ENCODE measurements at regions of chr15 and their contacts with region 1.

Region 1: DNA sequence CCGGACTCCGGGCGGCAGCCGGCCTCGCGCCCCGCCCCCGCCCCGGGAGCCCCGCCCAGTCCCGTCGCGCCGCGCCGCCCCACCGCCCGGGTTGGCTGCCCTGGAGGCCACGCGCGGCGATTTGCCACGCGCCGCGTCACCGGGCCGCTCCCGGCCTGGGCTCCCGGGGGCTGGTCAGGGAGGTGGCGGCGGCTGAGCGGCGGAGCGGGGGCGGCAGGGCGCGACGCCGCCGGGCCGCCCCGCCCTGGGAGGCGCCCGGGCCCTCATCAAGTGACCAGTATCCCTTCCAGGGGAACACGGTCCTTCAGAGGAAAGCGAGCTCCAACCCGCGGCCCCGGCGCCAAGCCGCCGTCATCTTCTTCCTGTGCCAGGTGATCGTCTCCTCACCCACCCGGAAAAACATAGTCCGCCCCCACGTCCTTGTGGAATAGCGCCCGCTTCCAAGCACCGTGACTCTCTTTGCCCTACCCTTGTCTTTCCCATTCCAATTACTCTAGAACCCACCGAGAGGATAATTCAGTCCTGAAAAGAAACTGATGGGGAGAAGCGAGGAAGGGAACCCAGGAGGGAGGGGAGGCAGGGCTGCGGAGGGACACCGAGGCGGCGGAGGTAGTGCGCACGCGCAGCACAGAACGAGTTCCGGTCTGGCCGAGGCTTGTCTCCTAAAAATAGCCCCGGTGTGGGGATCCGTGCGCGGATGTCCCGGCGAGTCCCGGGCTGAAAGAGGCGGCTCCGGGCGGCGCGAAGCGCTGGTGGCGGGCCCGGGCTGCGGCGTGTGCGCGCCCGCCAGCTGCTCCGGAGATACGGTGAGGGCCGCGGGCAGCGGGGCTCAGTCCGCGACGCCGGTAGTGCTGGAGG is at the start of gene MEF2A:
- H3K4me3 Mint-ChIP-seq: peak within 1 kb of the TSS; percentile 96
- H3K27ac Mint-ChIP-seq: peak within 1 kb of the TSS; percentile 97
- H3K4me1 Mint-ChIP-seq: peaks cover 51% of the 10 kb centered on the region
- H3K27me3 Mint-ChIP-seq: peaks cover 2% of the 10 kb centered on the region

Region 2: DNA sequence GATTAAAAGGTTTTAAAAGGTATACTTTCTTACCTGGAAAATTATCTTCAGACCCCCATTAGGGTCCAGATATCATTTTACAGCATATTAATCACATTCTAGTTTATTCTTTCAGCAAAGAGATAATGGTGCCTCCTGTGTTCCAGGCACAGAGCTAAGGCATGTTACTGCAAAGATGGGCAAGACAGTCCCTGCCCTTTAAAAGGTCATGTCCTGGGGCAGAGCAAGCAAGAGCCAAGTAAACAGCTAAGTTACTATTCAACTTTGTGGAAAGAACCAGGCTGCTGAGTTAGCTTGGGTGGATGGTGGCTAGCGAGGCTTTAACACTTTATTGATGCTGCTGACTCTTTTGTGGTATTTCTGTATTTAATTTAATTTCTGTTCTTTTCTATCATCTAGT is 239.3 kb before region 1 on chr15:
- intact Hi-C with region 1: no loop called
- H3K4me3 Mint-ChIP-seq: no peak overlapping the region
- H3K27ac Mint-ChIP-seq: no peak overlapping the region
- H3K4me1 Mint-ChIP-seq: no peaks in the 10 kb centered on the region
- H3K27me3 Mint-ChIP-seq: no peaks in the 10 kb centered on the region

Region 3: GRCh38 chr15:99452774-99453636 is 112.5 kb before region 1 on chr15:
- intact Hi-C with region 1: loop called (anchors 2 kb)
- H3K4me3 Mint-ChIP-seq: peak overlapping the region; percentile 62
- H3K27ac Mint-ChIP-seq: peak overlapping the region; percentile 98
- H3K4me1 Mint-ChIP-seq: peaks cover 71% of the 10 kb centered on the region
- H3K27me3 Mint-ChIP-seq: no peaks in the 10 kb centered on the region

Region 4: DNA sequence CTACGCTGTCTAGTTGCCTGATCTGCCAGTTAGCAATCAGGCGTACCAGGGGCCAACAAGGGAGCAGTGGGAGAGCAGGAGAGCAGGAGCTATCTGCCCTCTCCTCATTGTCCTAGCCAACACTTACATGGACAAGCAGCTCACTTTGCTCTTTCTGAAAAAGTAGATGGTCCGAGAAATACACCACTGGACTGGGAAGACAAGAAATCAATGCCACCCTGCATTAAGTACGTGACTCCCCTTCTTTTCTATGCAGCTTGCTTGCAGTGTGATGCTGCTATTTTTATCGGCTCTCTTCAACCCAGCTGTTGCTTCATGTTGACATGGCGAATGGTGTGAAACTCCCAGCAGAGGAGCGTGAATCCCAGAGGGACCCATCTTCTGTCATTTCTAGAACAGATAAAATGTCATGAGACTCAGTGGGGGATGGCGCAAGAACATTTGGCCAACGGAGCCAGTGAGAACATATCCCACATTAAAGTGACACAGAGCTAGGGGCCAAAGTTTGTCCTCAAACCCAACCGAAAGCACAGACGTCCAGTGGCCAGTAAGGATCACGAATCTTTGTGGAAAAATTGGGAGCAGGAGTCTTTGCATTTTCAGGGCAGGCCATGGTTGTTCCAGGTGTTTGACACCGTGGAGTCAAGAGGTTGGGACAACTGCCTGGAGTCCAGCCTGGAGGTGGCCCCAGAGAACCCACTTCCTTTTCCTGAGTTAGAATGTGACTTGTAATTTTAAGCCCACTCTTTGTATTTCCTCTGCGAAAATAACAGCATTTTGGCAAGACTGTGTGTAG is 53.5 kb before region 1 on chr15:
- intact Hi-C with region 1: loop called (anchors 5 kb)
- H3K4me3 Mint-ChIP-seq: no peak overlapping the region
- H3K27ac Mint-ChIP-seq: no peak overlapping the region
- H3K4me1 Mint-ChIP-seq: peaks cover 56% of the 10 kb centered on the region
- H3K27me3 Mint-ChIP-seq: peaks cover 2% of the 10 kb centered on the region

Region 5: DNA sequence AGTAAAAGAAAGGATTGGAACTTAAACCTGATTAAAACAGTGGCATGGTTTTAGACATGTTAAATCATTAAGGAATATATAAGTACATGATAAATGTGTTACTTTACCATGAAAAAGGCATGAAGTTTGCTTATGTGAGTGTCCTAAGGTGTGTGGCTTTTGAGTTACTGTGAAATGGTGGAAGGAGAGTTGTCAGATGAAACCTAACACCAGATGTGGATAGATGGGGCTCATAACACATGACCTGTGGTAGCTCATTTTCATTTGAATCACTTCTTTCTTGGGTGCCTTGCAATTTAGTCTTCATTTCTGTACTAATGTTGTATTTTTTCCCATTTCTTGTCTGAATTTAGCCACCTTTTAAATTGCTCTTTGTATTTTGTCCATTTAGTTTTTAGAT is 13.3 kb after region 1 on chr15:
- intact Hi-C with region 1: no loop called
- H3K4me3 Mint-ChIP-seq: no peak overlapping the region
- H3K27ac Mint-ChIP-seq: peak overlapping the region; percentile 39
- H3K4me1 Mint-ChIP-seq: peaks cover 58% of the 10 kb centered on the region
- H3K27me3 Mint-ChIP-seq: no peaks in the 10 kb centered on the region

Region 6: GRCh38 chr15:99631255-99631654 is 65.7 kb after region 1 on chr15:
- intact Hi-C with region 1: loop called (anchors 5 kb)
- H3K4me3 Mint-ChIP-seq: no peak overlapping the region
- H3K27ac Mint-ChIP-seq: peak overlapping the region; percentile 82
- H3K4me1 Mint-ChIP-seq: peaks cover 69% of the 10 kb centered on the region
- H3K27me3 Mint-ChIP-seq: no peaks in the 10 kb centered on the region

Measured in dendritic cell treated with granulocyte-macrophage colony-stimulating factor and Interleukin-4, amounts not matched to agents 40 ng/mL and 50 ng/mL, for 4 days (primary cell).